Gastrocnemius medialis (tissue), 4 donors: ENCODE measurements at regions of chr14 and their contacts with region 1.

Region 1: DNA sequence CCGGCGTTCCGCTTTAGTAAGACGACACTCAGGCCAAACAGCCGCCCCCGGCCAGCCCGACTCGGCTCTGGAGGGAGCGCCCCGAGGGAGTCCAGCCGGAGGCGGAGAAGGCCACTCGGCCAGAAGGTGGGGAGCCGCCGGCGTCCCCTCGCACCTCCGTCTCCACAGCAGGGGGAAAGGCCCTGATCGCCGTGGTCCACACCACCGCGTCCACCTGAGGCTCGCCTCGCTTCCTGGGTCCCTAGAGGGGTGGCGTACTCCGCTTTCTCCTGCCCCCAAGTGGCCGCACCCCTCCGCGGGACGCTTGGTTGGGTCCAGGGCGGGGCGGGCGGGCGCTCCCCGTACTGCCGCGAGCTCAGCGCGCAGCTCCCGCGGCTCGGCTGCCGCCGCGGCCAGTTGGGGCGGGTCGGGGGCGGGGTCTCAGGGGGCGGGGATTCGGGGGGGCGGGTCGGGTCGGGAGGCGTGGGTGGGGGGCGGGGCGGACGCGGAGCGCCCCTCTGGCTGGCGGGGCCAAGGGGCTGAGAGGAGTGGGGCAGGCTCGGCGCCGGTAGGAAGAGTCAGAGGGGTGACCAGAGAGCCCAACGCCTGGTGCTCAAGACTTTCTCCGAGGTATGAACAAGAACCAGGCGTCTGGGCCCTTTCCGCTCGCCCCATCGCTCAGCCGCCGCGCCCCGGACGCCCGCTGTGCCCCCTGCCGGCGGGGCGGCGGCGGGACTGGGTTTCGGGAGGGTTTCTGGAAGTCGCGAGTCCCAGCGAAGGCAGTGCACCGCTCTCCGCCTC is at the start of gene FRMD6:
- DNase-seq: peak; percentile 60 to 75
- ATAC-seq: peak; percentile 83 to 86
- H3K4me3 ChIP-seq: peak within 1 kb of the TSS; percentile 80 to 99 (median 89)
- H3K27ac ChIP-seq: peak within 1 kb of the TSS; percentile 94 to 97 (median 95)
- H3K4me1 ChIP-seq: peaks cover 11 to 16% of the 10 kb centered on the region in 2 donors
- H3K27me3 ChIP-seq: no peaks in the 10 kb centered on the region
- CTCF ChIP-seq: peak; percentile 78 to 93 (median 84)
- POLR2A ChIP-seq: peak; percentile 19 to 35
- total RNA-seq, gene FRMD6: 6.7 to 15.9 (median 13.0) TPM

Region 2: GRCh38 chr14:51006781-51007211 is 644.8 kb before region 1 on chr14:
- in situ Hi-C with region 1: no loop called
- intact Hi-C with region 1: loop called (anchors 5 kb)
- DNase-seq: peak; percentile 82 to 92
- ATAC-seq: peak; percentile 95 to 97
- H3K4me3 ChIP-seq: no peak overlapping the region
- H3K27ac ChIP-seq: peak overlapping the region; percentile 72 to 88 (median 81)
- H3K4me1 ChIP-seq: peaks cover 34 to 65% of the 10 kb centered on the region in 2 donors
- H3K27me3 ChIP-seq: no peaks in the 10 kb centered on the region
- CTCF ChIP-seq: no peak
- POLR2A ChIP-seq: no peak

Region 3: GRCh38 chr14:51239813-51240803 is 411.5 kb before region 1 on chr14 and contains the start of gene TMX1:
- in situ Hi-C with region 1: no loop called
- intact Hi-C with region 1: loop called (anchors 5 kb)
- DNase-seq: peak; percentile 94 to 98
- ATAC-seq: peak; percentile 100
- H3K4me3 ChIP-seq: peak within 1 kb of the TSS; percentile 89 to 98 (median 94)
- H3K27ac ChIP-seq: peak within 1 kb of the TSS; percentile 81 to 90 (median 88)
- H3K4me1 ChIP-seq: peaks cover 11 to 21% of the 10 kb centered on the region in 2 donors
- H3K27me3 ChIP-seq: no peaks in the 10 kb centered on the region
- CTCF ChIP-seq: no peak
- POLR2A ChIP-seq: peak; percentile 70 to 80
- total RNA-seq, gene TMX1: 13.5 to 17.3 (median 15.7) TPM

Region 4: DNA sequence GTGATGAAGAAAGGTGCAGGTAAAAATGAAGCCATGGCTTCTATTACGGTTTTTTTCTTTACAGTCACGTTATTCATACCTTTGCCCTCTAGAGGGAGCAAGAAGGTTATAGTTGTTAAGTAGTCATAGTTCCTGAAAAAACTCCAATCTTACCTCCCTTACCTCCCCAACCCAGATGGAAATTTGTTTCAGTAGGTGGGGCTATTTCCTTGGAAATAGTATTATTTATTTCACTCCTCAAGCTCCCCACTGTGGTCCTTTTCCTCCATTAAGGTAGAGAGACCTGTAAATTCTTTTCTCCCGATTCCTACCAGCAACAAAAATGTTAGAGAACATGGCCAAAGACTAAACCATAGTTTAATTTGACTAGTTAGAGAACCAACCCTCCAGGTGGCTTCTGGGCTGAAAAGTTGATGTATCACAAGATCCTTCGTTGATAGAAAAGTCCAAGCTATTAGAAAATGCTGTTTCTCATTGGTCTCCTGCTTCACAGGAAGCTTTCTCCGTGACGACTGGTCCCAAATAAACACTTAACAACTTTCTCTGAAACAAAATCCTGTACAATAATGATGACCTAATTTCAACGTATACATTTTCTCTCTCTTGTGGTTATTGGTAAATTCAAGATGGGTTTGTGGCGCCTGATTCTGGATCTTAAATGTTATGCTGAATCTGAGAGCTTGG is 368.0 kb before region 1 on chr14:
- in situ Hi-C with region 1: loop called in 2 of 4 experiments (anchors 5 to 10 kb)
- intact Hi-C with region 1: loop called (anchors 1 kb)
- DNase-seq: no peak
- ATAC-seq: peak; percentile 84 to 93
- H3K4me3 ChIP-seq: no peak overlapping the region
- H3K27ac ChIP-seq: no peak overlapping the region
- H3K4me1 ChIP-seq: no peaks in the 10 kb centered on the region
- H3K27me3 ChIP-seq: no peaks in the 10 kb centered on the region
- CTCF ChIP-seq: peak; percentile 53 to 81 (median 68)
- POLR2A ChIP-seq: no peak

Region 5: DNA sequence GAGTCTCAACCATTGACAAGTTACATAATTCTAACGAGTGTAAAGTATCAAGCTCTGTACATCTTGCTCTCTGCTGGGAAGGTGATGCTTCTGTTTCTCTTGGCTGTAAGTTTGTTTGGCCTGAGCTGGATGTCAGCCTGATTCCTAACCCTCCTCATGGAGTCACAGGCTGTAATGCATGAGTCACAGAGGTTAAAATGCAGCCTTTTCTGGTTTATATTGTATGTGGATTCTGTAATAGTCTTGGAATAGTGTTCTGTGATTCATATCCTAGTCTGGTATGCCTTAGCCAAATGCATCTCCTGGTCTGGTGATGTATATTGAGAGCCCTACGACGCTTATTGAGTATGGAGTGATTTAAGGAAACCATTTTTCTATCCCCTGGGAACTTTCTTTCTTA is 104.3 kb before region 1 on chr14:
- in situ Hi-C with region 1: no loop called
- intact Hi-C with region 1: loop called (anchors 5 kb)
- DNase-seq: peak; percentile 43 to 55
- ATAC-seq: peak; percentile 96 to 99
- H3K4me3 ChIP-seq: no peak overlapping the region
- H3K27ac ChIP-seq: peak overlapping the region; percentile 35 to 80 (median 54)
- H3K4me1 ChIP-seq: peaks cover 15 to 21% of the 10 kb centered on the region in 2 donors
- H3K27me3 ChIP-seq: no peaks in the 10 kb centered on the region
- CTCF ChIP-seq: no peak
- POLR2A ChIP-seq: no peak

Region 6: DNA sequence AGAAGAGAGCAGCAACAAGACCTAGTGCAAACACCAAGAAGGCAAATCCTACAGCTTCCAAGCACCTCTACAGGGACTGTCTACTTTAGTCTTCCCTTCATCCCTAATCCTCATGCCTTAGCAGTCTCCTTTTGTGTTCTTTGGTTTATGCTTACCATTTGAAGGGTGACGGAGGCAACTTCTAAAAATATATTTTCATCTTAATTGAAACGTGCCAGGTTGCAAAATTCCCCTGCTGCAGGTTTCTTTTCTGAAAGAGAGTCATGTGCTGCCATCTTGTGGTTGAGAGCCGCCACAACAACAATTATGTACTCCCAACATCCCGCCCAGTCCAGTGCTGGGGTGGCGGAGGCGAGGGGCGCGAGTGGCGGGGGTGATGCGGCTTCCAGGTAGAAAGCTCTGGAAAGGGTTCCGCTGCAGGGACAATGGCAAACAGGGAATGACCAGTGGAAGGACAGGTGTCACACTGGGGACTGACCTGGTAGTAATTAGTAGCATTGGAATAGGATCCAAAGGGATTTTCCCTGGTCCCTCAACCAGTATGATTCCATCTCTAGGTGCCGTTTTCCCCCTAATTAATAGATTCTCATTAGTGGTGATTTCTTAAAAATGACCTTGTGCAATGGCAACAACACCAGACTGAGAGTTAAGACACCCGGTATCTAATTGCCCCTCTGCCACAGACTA is 128.6 kb after region 1 on chr14:
- in situ Hi-C with region 1: loop called in 1 of 4 experiments (anchors 10 kb)
- intact Hi-C with region 1: loop called (anchors 5 kb)
- DNase-seq: peak; percentile 25 to 59
- ATAC-seq: peak; percentile 54 to 81
- H3K4me3 ChIP-seq: no peak overlapping the region
- H3K27ac ChIP-seq: no peak overlapping the region
- H3K4me1 ChIP-seq: no peaks in the 10 kb centered on the region
- H3K27me3 ChIP-seq: no peaks in the 10 kb centered on the region
- CTCF ChIP-seq: peak; percentile 47 to 87 (median 83)
- POLR2A ChIP-seq: no peak